ENCODE measurements at regions of chr11 and their contacts with region 1.

Region 1: DNA sequence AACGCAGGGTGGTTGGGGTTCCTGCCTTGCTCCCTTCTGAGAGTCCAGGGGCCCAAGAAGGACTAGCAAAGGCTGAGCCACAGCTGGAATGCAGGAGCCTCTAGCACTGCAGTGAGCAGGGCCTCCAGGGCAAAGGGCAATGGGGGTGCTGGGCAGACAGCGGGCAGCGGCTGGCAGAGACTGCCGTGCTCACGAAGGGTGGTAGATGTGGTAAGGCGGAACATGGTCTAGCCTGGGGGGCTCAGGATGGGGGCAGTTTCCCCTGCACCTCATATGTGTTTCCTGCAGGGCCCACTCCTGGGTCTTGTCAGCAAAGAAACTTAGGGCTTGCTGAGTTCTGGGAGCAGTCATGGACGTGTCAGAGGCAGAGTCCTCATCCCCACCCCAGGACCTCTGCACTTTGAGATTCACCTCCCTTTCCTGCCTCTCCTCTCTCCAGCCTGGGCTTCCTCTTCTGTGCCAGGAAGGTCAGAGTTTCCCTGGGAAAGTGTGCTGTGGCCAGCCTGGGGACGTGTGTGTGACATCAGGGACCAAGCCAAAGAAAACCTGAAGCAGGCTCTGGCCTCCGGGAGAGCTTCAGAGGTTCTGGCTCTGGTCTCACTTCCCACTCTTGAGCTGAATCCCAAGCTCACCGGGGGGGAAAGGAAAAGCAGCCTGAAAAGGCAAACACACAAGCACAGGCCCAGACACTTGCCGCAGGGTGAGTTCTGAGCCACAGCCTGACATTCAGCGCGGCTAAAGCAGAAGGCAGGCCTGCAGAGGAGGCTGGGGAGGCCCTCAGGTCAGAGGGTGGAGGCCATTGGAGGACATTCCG is 4.4 kb downstream of the MOGAT2 start:
- DNase-seq: no peak
- H3K4me3 Mint-ChIP-seq: no peak overlapping the region
- H3K27ac Mint-ChIP-seq: no peak overlapping the region
- H3K4me1 Mint-ChIP-seq: no peaks in the 10 kb centered on the region
- H3K27me3 Mint-ChIP-seq: no peaks in the 10 kb centered on the region

Region 2: DNA sequence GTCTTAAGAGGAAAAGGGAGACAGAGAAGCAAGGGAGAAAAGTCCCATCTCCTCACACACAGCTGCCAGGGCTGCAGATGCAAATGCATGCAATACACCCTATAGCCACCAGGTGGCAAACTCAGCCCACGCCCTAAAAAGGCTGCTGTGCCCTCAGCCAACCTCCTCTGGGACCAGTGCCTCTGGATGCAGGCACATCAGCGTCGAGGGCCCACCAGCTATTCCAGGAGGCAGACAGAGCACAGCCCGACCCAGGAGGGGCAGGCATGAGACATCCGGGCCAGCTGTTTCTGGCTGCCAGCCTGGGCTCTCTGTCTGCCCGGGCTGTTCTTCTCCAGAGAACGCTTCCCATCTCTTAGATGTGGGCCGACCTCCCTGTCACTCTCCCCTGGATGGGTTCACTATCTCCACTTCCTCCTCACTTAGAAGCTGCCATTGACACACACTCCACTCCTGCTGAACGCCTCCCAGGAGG is 441.8 kb before region 1 on chr11:
- CTCF ChIA-PET with region 1: no interaction called
- POLR2A ChIA-PET with region 1: no interaction called
- intact Hi-C with region 1: no loop called
- DNase-seq: peak; percentile 83
- H3K4me3 Mint-ChIP-seq: no peak overlapping the region
- H3K27ac Mint-ChIP-seq: peak overlapping the region; percentile 47
- H3K4me1 Mint-ChIP-seq: peaks cover 28% of the 10 kb centered on the region
- H3K27me3 Mint-ChIP-seq: no peaks in the 10 kb centered on the region

Region 3: DNA sequence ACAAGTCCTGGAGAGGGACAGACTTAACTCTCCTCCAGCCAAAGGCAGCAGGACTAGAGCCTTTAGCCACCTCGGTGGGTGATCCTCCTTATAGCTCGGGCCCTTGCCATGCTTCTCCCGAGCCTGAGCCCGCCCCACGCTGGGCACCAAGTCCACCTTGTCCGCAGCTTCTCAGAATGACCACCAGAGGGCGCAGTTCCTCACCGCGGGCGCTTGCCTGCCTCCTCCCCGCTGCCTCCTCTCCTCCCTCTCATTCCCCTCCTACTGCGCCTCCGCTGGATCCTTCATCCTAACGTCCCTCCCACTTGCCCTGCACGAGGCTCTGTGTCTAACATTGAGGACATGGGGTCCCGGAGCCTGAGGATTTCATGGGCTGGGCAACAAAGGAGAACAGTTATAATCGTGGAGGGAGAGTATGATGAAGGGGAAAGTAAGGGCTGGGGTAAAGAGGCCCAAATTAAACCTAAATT is 15.8 kb before region 1 on chr11:
- CTCF ChIA-PET with region 1: interaction called, 20 read pairs
- POLR2A ChIA-PET with region 1: no interaction called
- intact Hi-C with region 1: no loop called
- DNase-seq: peak; percentile 76
- H3K4me3 Mint-ChIP-seq: no peak overlapping the region
- H3K27ac Mint-ChIP-seq: no peak overlapping the region
- H3K4me1 Mint-ChIP-seq: no peaks in the 10 kb centered on the region
- H3K27me3 Mint-ChIP-seq: peaks cover 3% of the 10 kb centered on the region

Region 4: GRCh38 chr11:75768112-75768908 is 46.2 kb after region 1 on chr11 and contains the start of gene DGAT2:
- CTCF ChIA-PET with region 1: interaction called, 3 read pairs
- POLR2A ChIA-PET with region 1: no interaction called
- intact Hi-C with region 1: loop called (anchors 5 kb)
- DNase-seq: peak; percentile 74
- H3K4me3 Mint-ChIP-seq: peak within 1 kb of the TSS; percentile 41
- H3K27ac Mint-ChIP-seq: no peak within 1 kb of the TSS
- H3K4me1 Mint-ChIP-seq: peaks cover 24% of the 10 kb centered on the region
- H3K27me3 Mint-ChIP-seq: peaks cover 8% of the 10 kb centered on the region
- total RNA-seq, gene DGAT2: 2.5 to 3.1 TPM

Region 5: DNA sequence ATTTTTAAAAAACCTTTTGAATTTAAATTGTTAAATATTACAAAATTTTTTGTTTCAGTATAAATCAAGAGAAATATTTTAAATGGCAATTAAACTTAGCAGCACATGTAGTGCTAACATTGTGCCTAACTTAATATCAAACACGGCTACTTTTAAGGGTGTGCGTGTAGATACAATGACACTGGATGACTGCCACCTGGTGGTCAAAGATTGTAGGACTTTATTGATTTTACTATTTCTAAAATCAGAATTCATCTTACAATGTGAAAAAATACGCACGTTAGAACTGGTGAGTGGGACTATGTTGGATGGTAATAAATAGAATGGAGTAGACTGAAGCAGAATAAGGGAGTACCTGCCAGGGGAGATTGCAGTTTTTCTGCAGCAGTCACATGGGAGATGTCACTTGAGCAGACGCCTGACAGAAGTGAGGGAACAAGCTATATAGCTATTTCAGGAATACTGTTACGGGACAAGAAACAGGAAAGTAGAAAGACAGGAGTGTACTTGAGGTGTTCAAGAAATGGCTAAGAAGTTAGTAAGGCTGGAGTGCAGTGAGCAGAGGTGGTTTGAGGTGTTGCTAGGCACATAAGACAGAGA is 145.8 kb after region 1 on chr11:
- CTCF ChIA-PET with region 1: interaction called, 19 read pairs
- POLR2A ChIA-PET with region 1: no interaction called
- intact Hi-C with region 1: loop called (anchors 2 kb)
- DNase-seq: peak; percentile 22
- H3K4me3 Mint-ChIP-seq: no peak overlapping the region
- H3K27ac Mint-ChIP-seq: no peak overlapping the region
- H3K4me1 Mint-ChIP-seq: peaks cover 4% of the 10 kb centered on the region
- H3K27me3 Mint-ChIP-seq: no peaks in the 10 kb centered on the region

Region 6: DNA sequence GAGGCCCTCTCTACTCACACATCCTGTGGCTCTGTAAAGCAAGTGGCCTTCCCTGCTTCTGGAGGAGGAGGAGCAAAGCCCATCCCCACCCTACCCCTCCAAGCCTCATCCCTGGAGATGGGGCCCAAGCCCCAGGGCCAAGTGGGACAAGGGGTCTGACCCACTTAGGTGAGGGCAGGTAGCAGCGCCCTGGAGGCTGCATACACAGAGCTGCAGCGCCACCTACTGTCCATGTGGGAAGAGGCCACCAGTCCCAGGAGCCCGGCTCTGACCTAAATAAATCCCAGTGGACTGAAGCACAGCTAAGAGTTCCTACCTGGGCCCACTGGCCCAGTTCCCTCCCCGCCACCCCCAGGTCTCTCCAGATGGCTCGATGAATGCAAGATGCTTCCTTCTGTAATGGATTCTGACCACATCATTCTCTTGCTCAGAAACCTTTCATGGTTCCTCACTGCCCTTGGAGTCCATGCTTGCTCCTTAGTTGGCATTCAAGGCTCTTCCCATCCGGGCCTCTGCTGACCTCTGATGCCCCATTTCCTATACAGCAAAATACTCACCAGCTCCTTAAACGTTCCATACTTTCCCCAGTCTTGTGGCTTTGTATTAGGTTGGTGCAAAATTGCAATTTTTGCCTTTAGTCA is 596.8 kb after region 1 on chr11:
- CTCF ChIA-PET with region 1: interaction called, 3 read pairs
- POLR2A ChIA-PET with region 1: no interaction called
- intact Hi-C with region 1: loop called (anchors 10 kb)
- DNase-seq: peak; percentile 88
- H3K4me3 Mint-ChIP-seq: no peak overlapping the region
- H3K27ac Mint-ChIP-seq: no peak overlapping the region
- H3K4me1 Mint-ChIP-seq: peaks cover 15% of the 10 kb centered on the region
- H3K27me3 Mint-ChIP-seq: peaks cover 26% of the 10 kb centered on the region

Measured in activated CD4-positive, alpha-beta memory T cell treated with anti-CD3 and anti-CD28 coated beads for 36 hours (primary cell).